ENCODE measurements at regions of chr9 and their contacts with region 1.

Region 1: DNA sequence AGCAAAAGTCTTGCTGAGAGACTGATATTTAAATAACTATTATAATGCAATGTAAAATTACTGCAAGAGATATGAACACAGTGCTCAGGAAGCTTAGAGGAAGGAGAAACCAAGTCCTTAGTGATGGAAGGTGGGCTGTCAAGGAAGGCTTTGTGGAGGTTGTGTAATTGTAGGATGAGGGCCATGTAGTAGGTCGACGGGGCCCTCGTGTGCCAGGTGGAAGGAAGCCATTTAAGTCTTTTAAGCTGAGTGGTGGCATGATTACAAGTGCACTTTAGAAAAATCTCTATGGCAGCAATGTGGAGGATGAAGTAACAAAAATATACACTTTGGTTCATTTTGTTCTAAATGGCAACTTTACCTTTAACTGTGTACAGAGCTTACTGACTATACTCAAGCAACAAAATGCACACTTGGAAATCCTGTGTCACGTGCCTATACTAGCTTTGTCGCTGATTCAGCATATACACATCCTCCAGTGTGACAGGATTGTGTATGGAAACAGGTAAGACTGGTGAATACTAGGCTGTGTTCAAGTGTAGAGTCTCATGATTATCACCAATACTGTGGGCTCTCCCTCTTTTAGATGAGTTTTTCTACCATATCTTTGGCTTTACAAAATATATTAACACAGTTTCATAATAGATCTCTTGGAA is 78.6 kb downstream of the TMC1 start:
- DNase-seq: no peak
- ATAC-seq: no peak
- H3K4me3 ChIP-seq: no peak overlapping the region
- H3K27ac ChIP-seq: no peak overlapping the region
- H3K4me1 ChIP-seq: peaks cover 0 to 8% (median 0%) of the 10 kb centered on the region in 12 donors
- H3K27me3 ChIP-seq: no peaks in the 10 kb centered on the region
- CTCF ChIP-seq: no peak
- POLR2A ChIP-seq: no peak

Region 2: GRCh38 chr9:72203205-72203803 is 396.7 kb before region 1 on chr9:
- intact Hi-C with region 1: loop called in 1 of 10 experiments (anchors 10 kb)
- DNase-seq: no peak
- ATAC-seq: peak in 3 of 4 donors; percentile 49 to 74 (median 50)
- H3K4me3 ChIP-seq: no peak overlapping the region
- H3K27ac ChIP-seq: no peak overlapping the region
- H3K4me1 ChIP-seq: peaks cover 0 to 4% (median 0%) of the 10 kb centered on the region in 12 donors
- H3K27me3 ChIP-seq: no peaks in the 10 kb centered on the region
- CTCF ChIP-seq: peak in 7 of 12 donors; percentile 10 to 37 (median 28)
- POLR2A ChIP-seq: no peak

Region 3: DNA sequence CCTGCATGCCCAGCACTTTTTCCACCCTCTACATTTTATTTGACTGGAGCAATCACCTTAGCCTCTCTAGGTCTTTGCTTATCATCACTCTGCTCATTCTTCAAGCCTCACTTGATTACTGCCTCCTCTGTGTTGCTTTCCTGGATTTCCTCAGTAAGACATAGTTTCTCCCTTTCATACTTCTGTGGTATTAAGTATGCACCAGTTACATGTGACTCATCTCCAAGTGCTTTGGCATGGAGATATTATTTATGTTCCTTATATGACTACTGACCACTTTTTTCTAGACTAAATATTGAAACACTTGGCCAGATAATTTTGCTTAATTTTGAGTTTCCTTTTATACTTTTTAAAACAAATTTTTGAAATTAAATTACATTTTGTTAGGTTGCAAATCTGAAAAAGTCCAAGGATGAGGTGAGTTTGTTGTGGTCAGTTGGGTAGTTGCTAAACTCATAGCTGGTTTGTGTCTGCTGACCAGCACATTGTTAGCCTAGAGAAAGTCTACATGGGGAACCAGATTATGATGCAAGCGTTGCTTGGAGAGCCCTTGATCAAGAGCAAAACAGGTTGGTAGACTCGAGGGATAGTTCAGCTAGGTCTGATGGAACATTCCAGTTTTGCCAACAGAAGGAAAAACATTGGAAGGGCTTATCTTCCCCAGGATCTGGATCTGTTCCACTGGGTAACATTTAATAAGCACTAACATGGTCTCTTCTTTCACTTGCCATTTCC is 61.6 kb after region 1 on chr9:
- intact Hi-C with region 1: loop called in 1 of 10 experiments (anchors 10 kb)
- DNase-seq: no peak
- ATAC-seq: no peak
- H3K4me3 ChIP-seq: no peak overlapping the region
- H3K27ac ChIP-seq: no peak overlapping the region
- H3K4me1 ChIP-seq: no peaks in the 10 kb centered on the region
- H3K27me3 ChIP-seq: no peaks in the 10 kb centered on the region
- CTCF ChIP-seq: no peak
- POLR2A ChIP-seq: no peak

Region 4: DNA sequence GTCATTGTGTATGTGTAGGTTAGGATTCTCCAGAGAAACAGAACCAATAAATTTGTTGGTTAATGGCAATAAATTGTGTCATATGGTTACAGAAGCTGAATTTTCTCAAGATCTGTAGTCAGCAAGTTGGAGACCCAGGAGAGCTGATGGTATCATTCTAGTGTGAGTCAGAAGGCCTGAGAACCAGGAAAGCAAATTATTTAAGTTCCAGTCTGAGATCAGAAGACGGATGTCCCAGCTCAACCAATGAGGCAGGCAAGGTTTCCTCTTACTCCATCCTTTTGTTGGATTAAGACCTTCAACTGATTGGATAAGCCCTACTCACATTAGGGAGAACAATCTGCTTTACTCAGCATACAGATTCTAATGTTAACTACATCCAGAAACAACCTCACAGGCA is 1207.9 kb after region 1 on chr9:
- intact Hi-C with region 1: no loop called
- DNase-seq: no peak
- ATAC-seq: no peak
- H3K4me3 ChIP-seq: no peak overlapping the region
- H3K27ac ChIP-seq: no peak overlapping the region
- H3K4me1 ChIP-seq: no peaks in the 10 kb centered on the region
- H3K27me3 ChIP-seq: no peaks in the 10 kb centered on the region
- CTCF ChIP-seq: no peak
- POLR2A ChIP-seq: no peak

Measured in heart left ventricle (tissue), 16 donors.